ENCODE measurements at regions of chr22 and their contacts with region 1.

Region 1: DNA sequence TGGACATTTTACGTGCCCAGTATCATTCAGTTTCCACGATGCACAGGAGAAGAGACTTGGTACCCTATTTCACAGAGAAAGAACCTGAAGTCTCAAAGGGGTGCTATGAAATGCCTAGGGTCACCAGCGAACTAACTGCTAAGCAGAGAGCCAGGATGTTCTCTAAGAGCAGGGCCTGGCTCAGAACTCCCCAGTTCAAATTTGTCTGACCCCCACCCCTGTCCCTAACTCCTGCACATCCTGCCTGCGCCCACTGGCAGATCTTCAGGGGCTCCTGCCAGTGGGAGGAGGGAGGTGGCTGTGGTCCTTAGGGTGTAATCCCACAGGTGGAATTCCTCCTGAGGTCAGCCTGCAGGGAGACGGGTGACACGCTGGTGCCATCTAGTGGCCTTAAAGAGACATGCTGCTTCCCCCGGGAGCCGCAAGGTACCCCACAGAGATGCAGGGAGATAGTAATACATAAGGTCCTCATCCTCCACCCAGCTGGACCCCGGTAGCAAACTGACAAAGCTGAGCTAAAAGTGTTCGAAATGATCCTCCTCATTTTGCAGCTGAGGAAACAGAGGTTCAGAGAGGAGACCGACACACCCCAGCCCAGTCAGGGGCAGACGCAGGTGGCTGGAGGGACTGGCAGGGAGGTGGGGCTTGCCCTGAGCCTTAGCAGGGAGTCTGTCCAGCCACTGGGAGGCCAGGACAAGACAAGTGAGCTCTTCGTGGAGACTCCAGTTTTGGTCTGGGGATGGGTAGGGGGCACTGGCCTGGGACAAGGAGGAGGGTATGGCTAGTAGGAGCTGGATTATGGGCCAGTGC is 34.1 kb downstream of the MB start:
- DNase-seq: peak; percentile 58 to 61
- H3K4me3 ChIP-seq: no peak overlapping the region
- H3K27ac ChIP-seq: no peak overlapping the region
- H3K4me1 ChIP-seq: peaks cover 10 to 14% of the 10 kb centered on the region in 2 donors
- H3K27me3 ChIP-seq: no peaks in the 10 kb centered on the region
- CTCF ChIP-seq: peak; percentile 82 to 97 (median 89)
- POLR2A ChIP-seq: no peak

Region 2: GRCh38 chr22:35430897-35431322 is 152.2 kb before region 1 on chr22:
- intact Hi-C with region 1: loop called (anchors 2 kb)
- DNase-seq: peak; percentile 88 to 93
- H3K4me3 ChIP-seq: no peak overlapping the region
- H3K27ac ChIP-seq: peak overlapping the region in 1 of 3 donors; percentile 39
- H3K4me1 ChIP-seq: peaks cover 17 to 27% of the 10 kb centered on the region in 2 donors
- H3K27me3 ChIP-seq: no peaks in the 10 kb centered on the region
- CTCF ChIP-seq: peak; percentile 94 to 99 (median 98)
- POLR2A ChIP-seq: no peak

Region 3: GRCh38 chr22:35524966-35525686 is 57.9 kb before region 1 on chr22:
- intact Hi-C with region 1: no loop called
- DNase-seq: no peak
- H3K4me3 ChIP-seq: no peak overlapping the region
- H3K27ac ChIP-seq: no peak overlapping the region
- H3K4me1 ChIP-seq: no peaks in the 10 kb centered on the region
- H3K27me3 ChIP-seq: no peaks in the 10 kb centered on the region
- CTCF ChIP-seq: no peak
- POLR2A ChIP-seq: no peak

Region 4: GRCh38 chr22:35537232-35537631 is 45.8 kb before region 1 on chr22:
- intact Hi-C with region 1: no loop called
- DNase-seq: no peak
- H3K4me3 ChIP-seq: no peak overlapping the region
- H3K27ac ChIP-seq: no peak overlapping the region
- H3K4me1 ChIP-seq: peaks cover 17 to 24% of the 10 kb centered on the region in 2 donors
- H3K27me3 ChIP-seq: no peaks in the 10 kb centered on the region
- CTCF ChIP-seq: no peak
- POLR2A ChIP-seq: no peak

Region 5: DNA sequence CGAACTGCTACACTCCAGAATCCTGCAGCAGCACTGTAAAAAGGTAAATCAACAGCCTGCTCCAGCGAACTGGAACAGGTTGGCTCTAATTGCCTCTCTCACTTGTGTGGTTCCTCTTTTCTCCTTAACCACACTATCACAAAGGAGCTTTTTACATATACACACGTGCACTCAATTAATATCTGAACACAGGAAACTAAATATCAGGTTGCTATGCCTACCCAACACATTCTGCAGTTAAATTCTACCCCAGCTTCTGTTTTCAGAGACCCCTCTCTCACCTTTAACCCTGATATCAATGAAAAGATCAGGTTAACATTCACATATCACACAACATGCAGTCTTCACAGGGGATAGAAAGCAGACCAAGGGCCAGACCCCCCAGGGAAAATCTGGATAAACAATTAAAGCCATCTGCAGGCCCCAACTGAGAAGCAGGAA is 434.6 kb after region 1 on chr22:
- intact Hi-C with region 1: no loop called
- DNase-seq: peak; percentile 36 to 44
- H3K4me3 ChIP-seq: no peak overlapping the region
- H3K27ac ChIP-seq: peak overlapping the region in 1 of 3 donors; percentile 2
- H3K4me1 ChIP-seq: peaks cover 48 to 54% of the 10 kb centered on the region in 2 donors
- H3K27me3 ChIP-seq: no peaks in the 10 kb centered on the region
- CTCF ChIP-seq: no peak
- POLR2A ChIP-seq: no peak

Measured in thyroid gland (tissue), 4 donors.